WTC11 (cell line): ENCODE measurements at regions of chr16 and their contacts with region 1.

Region 1: DNA sequence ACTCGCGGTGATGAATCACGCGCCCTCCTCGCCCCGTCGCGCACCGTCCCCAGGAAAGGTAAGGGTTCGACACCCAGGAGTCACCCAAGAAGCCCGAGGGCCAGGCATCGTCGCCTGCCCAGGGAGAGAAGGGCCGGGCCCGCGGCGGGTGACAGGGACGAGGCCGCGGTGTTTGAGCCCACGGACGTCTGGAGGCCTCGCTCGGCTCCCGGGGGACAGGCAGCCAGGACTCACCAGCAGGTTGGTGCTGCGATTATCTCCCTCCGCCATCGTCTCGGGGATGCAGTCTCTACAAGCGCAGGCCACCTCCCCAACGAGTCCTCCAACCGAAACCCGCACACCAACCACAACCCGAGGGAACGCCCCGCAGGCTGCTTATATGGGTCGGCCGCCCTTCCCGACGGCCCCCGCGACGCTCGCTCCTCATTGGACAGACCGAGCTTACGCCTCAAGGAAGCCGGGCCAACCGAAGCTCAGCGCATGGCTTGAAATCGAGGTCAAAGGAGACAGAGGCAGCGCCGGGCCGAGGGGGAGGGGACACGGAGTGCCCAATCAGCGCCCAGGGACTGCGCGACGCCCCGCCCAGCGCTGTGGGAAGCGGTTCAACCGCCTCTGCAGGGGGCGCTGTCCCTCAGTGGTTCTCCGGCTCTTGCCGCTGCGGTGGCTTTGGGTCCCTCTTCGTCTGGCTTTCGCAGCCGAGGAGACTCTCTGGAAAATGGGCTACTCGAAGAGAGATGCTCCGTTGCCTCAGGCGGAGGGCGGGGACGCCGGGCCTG is at the start of gene ARL6IP1:
- DNase-seq: peak; percentile 99
- ATAC-seq: peak; percentile 98
- H3K4me3 Mint-ChIP-seq: peak within 1 kb of the TSS; percentile 88
- H3K27ac Mint-ChIP-seq: peak within 1 kb of the TSS; percentile 100
- H3K4me1 Mint-ChIP-seq: peaks cover 51% of the 10 kb centered on the region
- H3K27me3 Mint-ChIP-seq: no peaks in the 10 kb centered on the region
- CTCF ChIP-seq: peak; percentile 71
- total RNA-seq, gene ARL6IP1: 137 to 172 TPM (median 151 TPM) in 3 replicates

Region 2: DNA sequence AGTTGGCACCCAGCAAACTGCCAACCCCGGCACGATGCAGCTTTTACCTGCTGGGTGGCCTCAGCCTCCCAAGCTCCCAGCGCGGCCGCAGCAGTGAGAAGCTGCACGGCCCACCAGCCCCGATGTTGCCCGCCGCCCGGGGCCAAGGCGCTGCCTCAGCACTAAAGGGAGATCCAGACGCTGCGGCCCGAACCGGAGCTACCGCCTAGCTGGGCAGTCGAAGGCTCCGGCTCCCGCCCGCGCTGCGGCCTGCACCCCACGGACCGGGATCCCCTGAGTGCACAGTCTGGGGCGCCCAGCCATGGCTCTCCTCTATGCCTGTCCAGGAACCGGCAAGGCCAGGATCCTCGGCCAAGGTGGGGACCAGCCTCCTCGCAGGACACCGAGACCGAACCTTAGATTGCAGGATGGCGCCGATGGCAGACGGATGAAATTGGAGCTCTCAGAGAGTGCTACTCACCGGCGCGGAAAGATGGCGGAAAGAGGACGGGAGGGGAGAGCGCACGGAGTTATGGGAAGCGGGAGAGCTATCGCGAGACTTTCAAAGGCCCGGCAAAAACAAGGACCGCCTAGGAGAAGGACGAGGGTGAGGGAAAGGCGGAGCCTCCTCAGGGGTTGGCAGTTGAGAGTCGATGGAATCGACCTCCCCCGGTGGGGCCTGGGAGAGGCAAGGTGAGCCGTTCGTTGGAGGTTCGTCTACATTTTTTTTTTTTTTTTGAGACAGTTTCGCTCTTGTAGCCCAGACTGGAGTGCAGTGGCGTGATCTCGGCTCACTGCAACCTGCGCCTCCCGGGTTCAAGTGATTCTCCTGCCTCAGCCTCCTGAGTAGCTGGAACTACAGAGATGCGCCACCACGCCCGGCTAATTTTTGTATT is 11.3 kb before region 1 on chr16 and contains the start of gene RPS15A:
- CTCF ChIA-PET with region 1: interaction called, 40 read pairs
- POLR2A ChIA-PET with region 1: interaction called, 60 read pairs
- DNase-seq: peak; percentile 95
- ATAC-seq: peak; percentile 98
- H3K4me3 Mint-ChIP-seq: peak within 1 kb of the TSS; percentile 100
- H3K27ac Mint-ChIP-seq: peak within 1 kb of the TSS; percentile 99
- H3K4me1 Mint-ChIP-seq: peaks cover 39% of the 10 kb centered on the region
- H3K27me3 Mint-ChIP-seq: no peaks in the 10 kb centered on the region
- CTCF ChIP-seq: no peak
- total RNA-seq, gene RPS15A: 1,612 to 1,889 TPM (median 1,831 TPM) in 3 replicates

Region 3: DNA sequence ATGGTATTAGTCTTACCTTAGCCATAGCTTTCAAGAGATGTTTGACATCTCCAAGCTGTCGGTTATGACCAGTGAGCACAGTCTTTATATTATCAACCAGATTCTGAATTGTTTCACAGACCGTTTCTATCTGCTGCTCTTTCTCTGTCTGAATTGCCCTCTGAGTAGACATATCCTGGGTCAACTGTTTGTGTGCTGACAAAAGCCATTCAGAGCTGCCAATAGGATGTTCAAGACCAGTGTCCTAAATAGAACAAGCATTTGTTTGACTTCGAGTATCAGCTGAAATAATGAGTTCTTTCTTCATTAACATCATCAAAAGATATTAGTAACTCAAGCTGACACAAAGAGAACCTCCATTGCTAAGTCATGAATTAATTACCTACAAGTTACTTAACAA is 14.9 kb after region 1 on chr16:
- CTCF ChIA-PET with region 1: interaction called, 12 read pairs
- POLR2A ChIA-PET with region 1: interaction called, 3 read pairs
- DNase-seq: no peak
- ATAC-seq: no peak
- H3K4me3 Mint-ChIP-seq: no peak overlapping the region
- H3K27ac Mint-ChIP-seq: no peak overlapping the region
- H3K4me1 Mint-ChIP-seq: no peaks in the 10 kb centered on the region
- H3K27me3 Mint-ChIP-seq: no peaks in the 10 kb centered on the region
- CTCF ChIP-seq: no peak

Region 4: GRCh38 chr16:19153876-19154275 is 352.5 kb after region 1 on chr16:
- CTCF ChIA-PET with region 1: no interaction called
- POLR2A ChIA-PET with region 1: no interaction called
- DNase-seq: no peak
- ATAC-seq: peak; percentile 60
- H3K4me3 Mint-ChIP-seq: no peak overlapping the region
- H3K27ac Mint-ChIP-seq: no peak overlapping the region
- H3K4me1 Mint-ChIP-seq: no peaks in the 10 kb centered on the region
- H3K27me3 Mint-ChIP-seq: peaks cover 76% of the 10 kb centered on the region
- CTCF ChIP-seq: no peak